ENCODE measurements at regions of chr2 and their contacts with region 1.

Region 1: DNA sequence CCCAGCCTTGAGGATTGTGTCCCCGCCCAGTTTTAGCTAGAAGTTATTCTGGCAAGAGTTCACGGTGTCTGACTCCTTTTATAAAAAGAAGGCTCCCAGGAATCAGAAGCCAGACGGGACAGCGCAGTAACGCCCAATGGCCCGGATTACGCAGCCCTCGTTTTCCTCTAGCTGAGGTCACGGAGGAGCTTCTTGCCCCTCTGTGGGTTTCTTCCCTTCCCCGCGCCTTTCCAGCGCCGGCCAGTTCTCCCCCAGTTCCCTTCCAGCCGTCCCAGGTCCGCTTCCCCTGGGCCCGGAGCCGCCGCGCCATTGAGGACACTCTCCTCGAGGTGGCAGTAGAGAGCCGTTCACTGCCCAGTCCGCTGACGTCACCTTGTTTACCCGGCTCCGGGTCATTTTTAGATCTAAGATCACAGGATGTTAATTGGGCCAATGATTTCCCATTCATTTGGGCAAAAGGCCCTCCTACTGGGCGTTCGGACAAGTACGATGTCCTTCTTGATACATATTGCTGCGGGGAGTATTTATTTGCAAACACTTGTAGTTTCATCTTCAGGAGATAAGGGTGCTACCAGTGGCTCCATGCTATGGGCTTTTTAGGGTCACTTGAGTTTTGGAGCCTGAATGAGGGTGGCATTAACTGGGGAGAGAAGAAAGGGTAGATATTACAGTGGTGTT is 81.5 kb upstream of the PPM1B start:
- DNase-seq: peak; percentile 83 to 98 (median 90)

Region 2: DNA sequence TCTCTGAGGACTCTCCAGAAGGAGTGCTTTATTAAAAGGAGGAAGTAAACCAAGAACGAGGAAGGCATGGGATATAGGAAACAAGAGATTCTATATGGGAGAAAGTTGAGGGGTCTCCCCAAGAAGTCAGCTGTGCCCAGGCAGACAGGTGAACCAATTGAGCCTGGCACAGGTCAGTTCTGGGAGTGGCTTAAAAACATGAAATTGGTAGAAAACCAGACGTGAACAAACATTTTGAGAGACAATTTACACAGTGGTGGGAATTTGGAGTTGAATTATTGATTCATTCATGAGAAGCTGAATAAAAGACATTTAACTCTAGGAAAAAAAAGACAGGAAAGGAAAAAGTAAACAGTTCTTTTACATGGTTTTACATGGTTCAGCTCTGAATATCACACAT is 433.7 kb before region 1 on chr2:
- intact Hi-C with region 1: no loop called
- DNase-seq: no peak

Region 3: GRCh38 chr2:44038277-44038676 is 48.9 kb before region 1 on chr2:
- intact Hi-C with region 1: no loop called
- DNase-seq: no peak

Region 4: GRCh38 chr2:44155666-44156446 is 68.7 kb after region 1 on chr2:
- intact Hi-C with region 1: loop called (anchors 2 kb)
- DNase-seq: no peak

Region 5: GRCh38 chr2:44244129-44244871 is 157.1 kb after region 1 on chr2:
- intact Hi-C with region 1: loop called (anchors 2 kb)
- DNase-seq: peak in 8 of 10 donors; percentile 27 to 91 (median 56)

Region 6: DNA sequence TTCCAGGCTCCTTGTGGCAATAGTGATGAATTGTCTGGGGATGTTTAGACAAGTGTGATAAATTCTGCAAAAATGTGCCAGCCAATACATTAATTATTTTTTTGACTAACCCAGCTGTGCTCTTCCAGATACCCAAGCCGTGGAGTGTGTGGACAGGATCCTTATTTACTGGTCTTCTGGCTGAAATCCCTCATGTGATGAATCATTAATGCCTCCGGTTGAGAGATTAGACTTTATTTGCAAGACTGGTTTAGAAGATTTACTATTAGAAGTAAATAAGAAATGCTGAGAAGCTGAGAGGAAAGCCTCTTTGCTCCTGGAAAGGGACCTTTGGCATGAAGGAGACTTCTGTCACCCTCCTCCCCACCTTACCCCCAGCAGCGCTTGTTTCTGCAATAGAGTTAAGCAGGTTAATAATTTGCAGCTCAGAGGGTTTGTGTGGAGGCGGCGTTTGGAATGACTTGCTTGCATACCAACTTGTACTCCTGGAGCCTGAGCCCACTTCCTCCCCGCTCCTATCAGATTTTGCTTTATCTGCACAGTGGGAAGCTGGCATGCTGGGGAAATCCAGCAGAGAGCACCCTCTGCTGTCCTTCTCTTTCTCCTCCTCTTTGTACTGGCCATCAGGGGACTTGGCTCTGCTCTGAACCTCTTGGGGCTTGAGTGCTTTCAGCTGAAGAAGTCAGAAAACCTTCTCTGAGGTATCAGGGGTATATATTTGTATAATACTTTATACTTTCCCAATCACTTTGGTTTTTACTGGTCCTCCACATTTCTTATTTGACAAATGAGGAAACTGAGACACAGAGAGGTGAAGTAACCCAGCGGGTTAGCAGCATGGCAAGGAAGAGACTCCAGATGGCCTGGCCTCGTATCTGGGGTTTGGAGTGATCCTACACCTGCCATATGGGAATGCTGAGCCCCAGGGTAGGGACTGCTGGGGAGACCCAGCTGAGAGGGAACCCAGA is 204.4 kb after region 1 on chr2:
- intact Hi-C with region 1: loop called (anchors 1 kb)
- DNase-seq: peak in 7 of 10 donors; percentile 39 to 93 (median 55)

Region 7: DNA sequence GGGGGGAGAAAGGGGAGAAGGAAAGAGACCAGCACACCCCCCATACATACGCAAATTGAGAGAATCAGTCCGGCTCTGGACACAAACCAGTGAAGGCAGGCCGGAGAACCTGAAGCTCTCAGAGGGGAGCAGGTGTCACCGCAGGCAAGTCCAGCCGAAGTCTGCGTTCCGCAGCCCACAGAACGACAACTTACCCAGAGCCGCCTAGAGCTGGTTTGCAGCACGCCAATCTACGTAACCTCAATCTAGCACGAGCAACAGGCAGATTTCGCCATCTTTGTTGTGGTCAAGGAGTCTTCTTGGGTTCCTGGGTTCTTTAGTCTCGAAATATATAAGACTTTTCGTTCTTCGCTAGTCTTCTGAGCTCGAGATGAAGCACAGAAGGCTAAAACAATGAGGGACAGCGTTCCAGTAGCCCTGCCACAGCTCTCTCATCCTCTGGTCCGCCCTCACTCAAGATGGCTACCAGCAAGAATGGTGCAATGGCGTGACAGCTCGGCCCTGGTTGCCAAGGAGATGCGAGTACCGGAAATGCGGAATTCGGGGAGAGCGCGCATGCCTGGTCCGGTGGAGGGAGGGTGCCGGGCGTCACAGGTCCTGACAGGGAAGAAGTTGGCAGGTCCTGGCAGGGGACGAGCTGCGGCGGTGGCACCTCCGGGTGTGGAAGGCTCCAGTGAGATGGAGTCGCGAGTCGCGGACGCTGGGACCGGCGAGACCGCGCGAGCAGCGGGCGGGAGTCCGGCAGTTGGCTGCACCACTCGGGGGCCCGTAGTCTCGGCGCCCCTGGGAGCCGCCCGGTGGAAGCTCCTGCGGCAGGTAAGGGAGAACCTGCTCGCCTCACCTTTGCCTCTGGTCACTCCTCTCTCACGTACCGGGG is 274.4 kb after region 1 on chr2 and contains the starts of genes CAMKMT and PREPL:
- intact Hi-C with region 1: loop called (anchors 5 kb)
- DNase-seq: peak; percentile 94 to 99 (median 98)

Region 8: GRCh38 chr2:44479122-44479887 is 392.1 kb after region 1 on chr2:
- intact Hi-C with region 1: loop called (anchors 5 kb)
- DNase-seq: peak in 2 of 10 donors; percentile 4 to 24